Mammary epithelial cell (primary cell): ENCODE measurements at regions of chr5 and their contacts with region 1.

Region 1: DNA sequence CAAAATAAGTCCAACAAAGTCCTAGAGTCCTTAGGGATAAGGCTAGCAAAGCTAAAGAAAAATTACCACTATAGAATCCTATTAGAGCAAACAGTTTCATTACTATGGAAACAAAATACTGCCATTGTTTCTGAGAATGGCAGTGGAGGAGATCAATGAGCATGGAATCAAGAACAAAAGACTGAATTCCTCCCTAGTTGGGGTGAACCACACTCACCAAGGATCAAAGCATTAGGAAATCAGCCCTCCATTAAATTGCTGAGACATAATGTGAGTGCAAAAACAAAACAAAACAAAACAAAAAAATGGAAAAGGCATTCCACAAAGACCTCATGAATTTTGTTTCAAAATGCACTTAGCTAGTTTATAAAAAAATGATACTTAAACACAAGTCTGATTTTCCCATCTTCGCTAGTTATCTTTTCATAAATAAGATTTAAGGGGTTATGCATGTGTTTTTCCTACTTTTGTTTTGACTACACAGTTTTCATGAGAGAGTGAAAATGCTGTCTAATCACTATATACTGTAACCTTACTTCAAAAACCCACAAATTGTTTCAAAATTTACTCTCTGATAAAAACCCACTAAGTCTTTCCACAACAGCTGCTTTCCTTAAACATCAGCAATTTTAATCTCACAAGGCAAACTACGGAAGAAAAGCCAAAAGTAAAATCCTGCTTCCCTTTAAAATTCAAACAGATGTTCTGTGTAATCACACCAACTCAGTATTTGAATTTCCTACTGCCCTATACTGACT is 9.7 kb downstream of the SERINC5 start:
- DNase-seq: peak; percentile 42
- H3K4me3 ChIP-seq: peak overlapping the region in 1 of 3 experiments; percentile 8
- H3K27ac ChIP-seq: peak overlapping the region; percentile 98
- H3K4me1 ChIP-seq: peaks cover 30% of the 10 kb centered on the region
- H3K27me3 ChIP-seq: no peaks in the 10 kb centered on the region
- CTCF ChIP-seq: no peak

Region 2: GRCh38 chr5:80216753-80217596 is 29.2 kb before region 1 on chr5:
- CTCF ChIA-PET with region 1: no interaction called
- dilution Hi-C with region 1: no loop called
- in situ Hi-C with region 1: no loop called
- intact Hi-C with region 1: loop called (anchors 1 kb)
- DNase-seq: no peak
- H3K4me3 ChIP-seq: no peak overlapping the region
- H3K27ac ChIP-seq: no peak overlapping the region
- H3K4me1 ChIP-seq: peaks cover 17% of the 10 kb centered on the region
- H3K27me3 ChIP-seq: no peaks in the 10 kb centered on the region
- CTCF ChIP-seq: no peak

Region 3: GRCh38 chr5:80231243-80231642 is 14.9 kb before region 1 on chr5:
- CTCF ChIA-PET with region 1: no interaction called
- dilution Hi-C with region 1: no loop called
- in situ Hi-C with region 1: no loop called
- intact Hi-C with region 1: no loop called
- DNase-seq: peak; percentile 44
- H3K4me3 ChIP-seq: no peak overlapping the region
- H3K27ac ChIP-seq: no peak overlapping the region
- H3K4me1 ChIP-seq: no peaks in the 10 kb centered on the region
- H3K27me3 ChIP-seq: no peaks in the 10 kb centered on the region
- CTCF ChIP-seq: no peak